ENCODE measurements at regions of chr1 and their contacts with region 1.

Region 1: GRCh38 chr1:209653915-209654351 is 1.7 kb upstream of the LAMB3 start:
- DNase-seq: no peak
- ATAC-seq: no peak

Region 2: GRCh38 chr1:209667708-209668107 is 13.8 kb after region 1 on chr1:
- intact Hi-C with region 1: loop called (anchors 2 kb)
- DNase-seq: no peak
- ATAC-seq: no peak